Naive thymus-derived CD4-positive, alpha-beta T cell (primary cell): ENCODE measurements at regions of chr5 and their contacts with region 1.

Region 1: GRCh38 chr5:37111426-37112382 is 137.5 kb downstream of the CPLANE1 start:
- DNase-seq: peak in 7 of 9 donors; percentile 42 to 73 (median 62)
- ATAC-seq: peak; percentile 86
- H3K4me3 ChIP-seq: peak overlapping the region; percentile 19
- H3K4me3 Mint-ChIP-seq: peak overlapping the region; percentile 42 to 83 (median 72)
- H3K27ac ChIP-seq: peak overlapping the region; percentile 47
- H3K27ac Mint-ChIP-seq: peak overlapping the region; percentile 6 to 88 (median 48)
- H3K4me1 ChIP-seq: peaks cover 14 to 30% of the 10 kb centered on the region in 2 donors
- H3K4me1 Mint-ChIP-seq: peaks cover 33 to 50% (median 43%) of the 10 kb centered on the region in 7 donors
- H3K27me3 ChIP-seq: no peaks in the 10 kb centered on the region
- H3K27me3 Mint-ChIP-seq: no peaks in the 10 kb centered on the region

Region 2: DNA sequence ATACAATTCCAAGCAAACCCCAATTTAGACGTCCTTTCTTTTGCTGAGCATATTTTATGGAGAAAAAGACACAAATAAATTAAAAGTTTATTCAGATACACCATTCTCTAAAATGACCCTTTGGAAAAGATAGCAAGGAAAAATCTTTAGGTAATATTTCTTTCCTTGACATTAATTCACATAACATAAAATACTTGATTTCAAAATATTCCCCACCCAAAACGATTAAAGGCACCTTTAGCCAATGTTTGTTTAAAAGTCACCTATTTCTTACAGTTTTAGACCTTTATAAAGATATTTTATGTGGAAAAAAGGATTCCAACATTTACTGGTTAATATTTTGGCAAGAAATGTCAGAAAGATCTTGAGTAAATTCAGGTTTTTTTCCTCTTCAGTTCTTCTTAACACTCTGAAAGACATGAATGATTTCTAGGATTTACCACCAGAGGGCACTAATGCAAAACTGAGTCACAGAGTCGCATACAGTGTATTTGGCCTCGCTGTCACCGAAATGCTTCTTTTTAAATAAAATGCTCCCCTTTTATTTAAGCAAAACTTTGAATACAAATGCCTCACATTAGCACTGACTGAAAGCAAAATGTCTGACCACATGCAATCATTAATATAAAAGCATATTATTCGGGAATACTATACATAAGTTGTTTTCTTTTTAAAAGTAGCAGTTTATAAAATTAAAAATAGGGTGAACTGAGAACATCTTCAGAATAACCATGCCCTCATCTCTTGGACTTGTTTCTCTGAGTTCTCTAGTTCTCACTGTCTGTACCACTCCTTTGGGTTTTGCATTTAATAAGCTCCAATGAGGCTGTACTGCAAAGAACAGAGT is 382.8 kb before region 1 on chr5:
- CTCF ChIA-PET with region 1: no interaction called
- POLR2A ChIA-PET with region 1: no interaction called
- intact Hi-C with region 1: loop called in 1 of 2 experiments (anchors 10 kb)
- DNase-seq: peak in 7 of 9 donors; percentile 24 to 69 (median 58)
- ATAC-seq: peak; percentile 59
- H3K4me3 ChIP-seq: no peak overlapping the region
- H3K4me3 Mint-ChIP-seq: no peak overlapping the region
- H3K27ac ChIP-seq: no peak overlapping the region
- H3K27ac Mint-ChIP-seq: peak overlapping the region in 1 of 9 donors; percentile 14
- H3K4me1 ChIP-seq: peaks cover 0 to 2% of the 10 kb centered on the region in 2 donors
- H3K4me1 Mint-ChIP-seq: peaks cover 9 to 19% (median 15%) of the 10 kb centered on the region in 7 donors
- H3K27me3 ChIP-seq: no peaks in the 10 kb centered on the region
- H3K27me3 Mint-ChIP-seq: peaks cover 0 to 11% (median 4%) of the 10 kb centered on the region in 5 donors

Region 3: GRCh38 chr5:37043688-37044087 is 68.0 kb before region 1 on chr5:
- CTCF ChIA-PET with region 1: no interaction called
- POLR2A ChIA-PET with region 1: no interaction called
- intact Hi-C with region 1: loop called in 1 of 2 experiments (anchors 5 kb)
- DNase-seq: no peak
- ATAC-seq: no peak
- H3K4me3 ChIP-seq: no peak overlapping the region
- H3K4me3 Mint-ChIP-seq: no peak overlapping the region
- H3K27ac ChIP-seq: no peak overlapping the region
- H3K27ac Mint-ChIP-seq: no peak overlapping the region
- H3K4me1 ChIP-seq: peaks cover 0 to 3% of the 10 kb centered on the region in 2 donors
- H3K4me1 Mint-ChIP-seq: peaks cover 0 to 4% (median 0%) of the 10 kb centered on the region in 7 donors
- H3K27me3 ChIP-seq: no peaks in the 10 kb centered on the region
- H3K27me3 Mint-ChIP-seq: no peaks in the 10 kb centered on the region

Region 4: GRCh38 chr5:37071901-37072581 is 39.7 kb before region 1 on chr5:
- CTCF ChIA-PET with region 1: no interaction called
- POLR2A ChIA-PET with region 1: no interaction called
- intact Hi-C with region 1: loop called in 1 of 2 experiments (anchors 5 kb)
- DNase-seq: no peak
- ATAC-seq: no peak
- H3K4me3 ChIP-seq: no peak overlapping the region
- H3K4me3 Mint-ChIP-seq: no peak overlapping the region
- H3K27ac ChIP-seq: no peak overlapping the region
- H3K27ac Mint-ChIP-seq: no peak overlapping the region
- H3K4me1 ChIP-seq: no peaks in the 10 kb centered on the region
- H3K4me1 Mint-ChIP-seq: no peaks in the 10 kb centered on the region
- H3K27me3 ChIP-seq: no peaks in the 10 kb centered on the region
- H3K27me3 Mint-ChIP-seq: no peaks in the 10 kb centered on the region

Region 5: DNA sequence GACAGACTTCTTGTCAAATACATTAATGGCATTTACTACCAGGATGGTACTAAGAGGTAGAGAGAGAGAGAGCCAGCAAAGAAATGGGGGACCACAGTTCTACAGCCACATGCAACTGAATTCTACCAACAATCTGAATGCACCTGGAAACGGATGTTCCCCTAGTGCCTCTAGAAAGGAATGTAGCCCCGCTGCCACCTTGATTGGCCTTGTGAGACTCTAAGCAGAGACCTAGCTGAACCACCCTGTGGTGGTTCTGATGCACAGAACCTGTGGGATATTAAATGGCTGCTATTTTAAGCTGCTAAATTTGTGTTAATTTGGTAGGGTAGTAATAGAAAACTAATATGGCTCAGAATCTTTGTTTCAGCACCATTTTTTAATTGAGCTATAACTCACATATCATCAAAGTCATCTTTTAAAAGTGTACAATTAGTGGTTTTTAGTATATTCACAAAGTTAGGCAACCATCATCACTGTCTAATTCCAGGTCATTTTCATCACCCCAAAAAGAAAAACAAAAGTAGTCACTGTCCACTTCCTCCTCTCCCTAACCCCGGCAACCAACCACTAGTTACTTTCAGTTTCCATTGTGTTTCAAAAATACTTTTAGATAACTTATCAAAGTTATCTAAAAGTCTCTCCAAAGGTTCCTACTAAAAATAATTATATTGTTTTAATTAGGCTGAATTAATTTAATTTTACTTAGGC is 85.8 kb after region 1 on chr5:
- CTCF ChIA-PET with region 1: no interaction called
- POLR2A ChIA-PET with region 1: no interaction called
- intact Hi-C with region 1: loop called in 1 of 2 experiments (anchors 1 kb)
- DNase-seq: peak in 5 of 9 donors; percentile 6 to 32 (median 18)
- ATAC-seq: peak; percentile 69
- H3K4me3 ChIP-seq: peak overlapping the region; percentile 54
- H3K4me3 Mint-ChIP-seq: peak overlapping the region; percentile 78 to 96 (median 87)
- H3K27ac ChIP-seq: peak overlapping the region; percentile 70
- H3K27ac Mint-ChIP-seq: peak overlapping the region; percentile 83 to 98 (median 94)
- H3K4me1 ChIP-seq: peaks cover 6 to 9% of the 10 kb centered on the region in 2 donors
- H3K4me1 Mint-ChIP-seq: peaks cover 9 to 28% (median 25%) of the 10 kb centered on the region in 7 donors
- H3K27me3 ChIP-seq: no peaks in the 10 kb centered on the region
- H3K27me3 Mint-ChIP-seq: no peaks in the 10 kb centered on the region

Region 6: GRCh38 chr5:37448941-37449340 is 337.2 kb after region 1 on chr5:
- CTCF ChIA-PET with region 1: no interaction called
- POLR2A ChIA-PET with region 1: no interaction called
- intact Hi-C with region 1: no loop called
- DNase-seq: no peak
- ATAC-seq: no peak
- H3K4me3 ChIP-seq: no peak overlapping the region
- H3K4me3 Mint-ChIP-seq: no peak overlapping the region
- H3K27ac ChIP-seq: no peak overlapping the region
- H3K27ac Mint-ChIP-seq: no peak overlapping the region
- H3K4me1 ChIP-seq: no peaks in the 10 kb centered on the region
- H3K4me1 Mint-ChIP-seq: no peaks in the 10 kb centered on the region
- H3K27me3 ChIP-seq: no peaks in the 10 kb centered on the region
- H3K27me3 Mint-ChIP-seq: no peaks in the 10 kb centered on the region

Region 7: DNA sequence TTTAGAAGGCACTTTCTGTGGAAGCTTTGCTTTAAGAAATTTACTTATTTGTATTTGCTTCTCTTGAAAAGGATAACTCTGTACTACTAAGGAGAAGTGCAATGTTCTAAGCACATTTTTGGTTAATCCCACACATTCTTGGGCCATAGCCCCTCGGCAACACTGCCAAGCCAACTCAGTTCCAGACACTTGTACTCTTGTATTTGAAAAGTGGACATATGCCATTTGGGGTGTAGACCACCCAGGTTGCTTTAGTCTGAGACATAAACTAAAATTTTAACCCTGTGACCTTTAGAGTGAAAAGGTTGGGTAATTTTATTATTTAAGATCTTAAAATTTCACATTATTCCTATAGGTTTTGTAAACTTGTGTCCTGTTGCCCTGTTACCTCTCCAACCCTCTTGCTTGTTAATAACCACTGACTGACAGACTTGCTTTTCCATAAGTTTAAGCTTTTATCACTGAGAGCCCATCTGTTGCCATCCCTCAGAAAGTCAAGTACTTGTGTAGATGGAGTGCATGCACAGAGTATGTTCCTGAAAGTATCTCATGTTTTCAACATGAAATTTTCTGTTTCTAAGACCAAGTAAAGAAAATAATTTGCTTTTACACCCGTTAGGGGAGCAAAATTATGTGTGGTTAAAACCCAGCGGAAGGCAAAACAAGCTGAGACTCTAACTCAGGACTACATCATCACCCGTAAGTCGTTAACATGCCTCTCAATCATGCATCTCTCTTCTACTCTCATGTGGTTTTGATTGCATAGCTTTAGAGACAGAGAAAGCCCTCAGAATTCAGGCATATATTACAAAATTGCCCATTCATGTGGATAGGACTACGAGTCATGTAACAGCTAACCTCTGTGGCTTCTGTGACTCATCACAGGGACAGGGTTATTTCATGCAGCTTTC is 610.8 kb after region 1 on chr5:
- CTCF ChIA-PET with region 1: no interaction called
- POLR2A ChIA-PET with region 1: no interaction called
- intact Hi-C with region 1: loop called in 1 of 2 experiments (anchors 5 kb)
- DNase-seq: no peak
- ATAC-seq: peak; percentile 72
- H3K4me3 ChIP-seq: no peak overlapping the region
- H3K4me3 Mint-ChIP-seq: peak overlapping the region in 1 of 10 donors; percentile 67
- H3K27ac ChIP-seq: no peak overlapping the region
- H3K27ac Mint-ChIP-seq: peak overlapping the region in 2 of 9 donors; percentile 32 to 85
- H3K4me1 ChIP-seq: peaks cover 0 to 9% of the 10 kb centered on the region in 2 donors
- H3K4me1 Mint-ChIP-seq: peaks cover 0 to 27% (median 0%) of the 10 kb centered on the region in 7 donors
- H3K27me3 ChIP-seq: no peaks in the 10 kb centered on the region
- H3K27me3 Mint-ChIP-seq: no peaks in the 10 kb centered on the region